Activated B cell treated with CpG ODN at 0.5 μM for 24 hours (primary cell): ENCODE measurements at regions of chr5 and their contacts with region 1.

Region 1: DNA sequence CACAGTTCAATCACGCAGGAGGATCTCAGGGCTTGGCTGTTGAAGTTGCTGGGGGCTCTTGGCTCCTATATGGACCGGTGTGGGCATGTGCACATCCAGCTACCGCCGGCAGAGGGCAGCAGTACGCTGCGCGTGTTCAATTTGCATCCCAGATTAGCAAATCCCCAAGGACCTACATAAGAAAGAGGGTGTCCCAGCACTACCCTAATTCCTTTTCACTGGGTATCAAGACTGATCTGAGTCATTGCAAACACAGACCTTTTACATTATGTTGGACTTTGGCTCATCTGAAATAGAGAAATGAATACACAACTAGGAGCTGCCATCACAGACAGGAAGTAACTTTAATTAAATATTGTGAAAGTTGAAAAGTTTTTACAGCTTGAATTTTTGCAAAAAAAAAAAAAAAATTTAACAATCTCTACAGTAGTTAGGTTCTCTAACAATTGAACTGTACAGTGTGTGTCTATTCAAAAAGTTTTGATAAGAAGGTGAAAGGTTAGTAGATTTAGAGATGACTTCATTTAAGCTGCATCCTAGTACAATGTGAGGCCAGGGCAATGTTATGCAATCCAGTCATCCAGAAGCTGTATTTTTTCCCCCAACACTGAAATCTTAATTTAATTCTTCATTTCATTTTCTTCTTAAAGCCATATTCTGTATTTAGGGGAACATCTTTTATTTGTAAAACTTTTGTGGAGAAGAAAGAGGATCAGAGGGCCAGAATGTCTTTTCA is 404.0 kb downstream of the EBF1 start:
- DNase-seq: peak; percentile 76
- ATAC-seq: peak; percentile 96
- H3K4me3 Mint-ChIP-seq: no peak overlapping the region
- H3K27ac Mint-ChIP-seq: peak overlapping the region; percentile 73
- H3K4me1 Mint-ChIP-seq: peaks cover 26% of the 10 kb centered on the region
- H3K27me3 Mint-ChIP-seq: no peaks in the 10 kb centered on the region
- CTCF ChIP-seq: peak; percentile 92

Region 2: DNA sequence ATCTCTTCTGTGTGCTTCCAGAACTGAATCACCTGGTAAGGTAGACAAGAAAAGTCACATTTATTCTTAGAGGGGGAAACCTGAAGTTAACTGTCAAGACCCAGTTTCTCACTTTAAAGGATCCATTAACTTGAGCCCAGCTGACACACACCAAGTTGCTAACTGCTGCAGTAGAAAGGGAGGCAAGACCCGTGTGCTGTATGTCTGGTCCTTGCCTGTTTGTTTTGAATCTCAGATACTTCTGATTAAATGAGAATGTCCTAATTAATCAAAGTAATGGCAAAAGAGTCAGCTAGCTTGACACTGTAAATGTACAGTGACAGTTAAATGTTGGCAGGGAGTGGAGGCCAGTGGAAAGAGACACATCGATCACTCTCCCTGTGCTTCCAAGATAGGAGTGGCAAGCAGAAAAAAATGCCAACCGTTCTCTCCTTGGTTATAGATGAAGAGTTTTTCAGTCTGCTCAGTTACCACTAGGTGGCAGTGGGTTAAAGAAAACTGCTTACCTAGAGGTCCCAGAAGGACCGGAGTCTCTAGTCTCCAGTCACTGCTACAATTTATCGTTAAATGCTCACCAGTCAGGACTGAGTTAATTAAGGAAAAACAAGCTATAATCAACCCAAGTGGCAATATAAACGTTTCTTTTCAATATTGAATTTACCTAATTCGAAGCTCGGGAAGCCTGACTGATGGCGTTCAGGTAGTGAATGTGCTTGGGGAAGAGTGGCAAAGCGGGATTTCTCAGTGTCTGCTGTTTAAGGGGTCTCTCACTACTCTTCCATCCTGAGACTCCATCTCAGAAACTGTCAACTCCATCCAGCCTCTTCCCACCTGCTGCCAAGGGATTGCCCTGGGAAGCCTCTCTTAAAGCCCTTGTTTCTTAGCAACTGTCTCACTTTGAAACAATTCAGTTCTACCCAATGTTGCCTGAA is 933.8 kb before region 1 on chr5:
- CTCF ChIA-PET with region 1: no interaction called
- POLR2A ChIA-PET with region 1: no interaction called
- intact Hi-C with region 1: loop called (anchors 1 kb)
- DNase-seq: no peak
- ATAC-seq: peak; percentile 87
- H3K4me3 Mint-ChIP-seq: no peak overlapping the region
- H3K27ac Mint-ChIP-seq: no peak overlapping the region
- H3K4me1 Mint-ChIP-seq: no peaks in the 10 kb centered on the region
- H3K27me3 Mint-ChIP-seq: no peaks in the 10 kb centered on the region
- CTCF ChIP-seq: peak; percentile 17

Region 3: DNA sequence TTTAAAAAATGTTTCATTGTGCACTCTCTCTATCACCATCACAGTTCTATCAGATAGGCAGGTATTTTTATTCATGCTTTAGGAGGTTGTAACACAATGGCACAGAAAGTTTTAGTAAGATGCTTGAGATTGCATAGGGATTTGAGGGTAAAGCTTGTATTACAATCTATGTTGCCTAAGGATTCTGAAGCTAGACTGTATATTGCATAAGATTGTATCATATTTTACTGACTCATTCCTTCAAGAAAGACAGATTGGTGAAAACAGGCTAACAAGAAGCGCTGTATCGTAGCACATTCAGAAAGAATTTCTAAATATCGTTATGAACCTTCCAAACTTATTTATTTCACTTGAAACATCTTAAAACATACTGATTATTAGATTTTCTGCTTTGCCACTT is 173.8 kb before region 1 on chr5:
- CTCF ChIA-PET with region 1: no interaction called
- POLR2A ChIA-PET with region 1: no interaction called
- intact Hi-C with region 1: no loop called
- DNase-seq: no peak
- ATAC-seq: no peak
- H3K4me3 Mint-ChIP-seq: no peak overlapping the region
- H3K27ac Mint-ChIP-seq: no peak overlapping the region
- H3K4me1 Mint-ChIP-seq: peaks cover 6% of the 10 kb centered on the region
- H3K27me3 Mint-ChIP-seq: no peaks in the 10 kb centered on the region
- CTCF ChIP-seq: no peak

Region 4: GRCh38 chr5:158739951-158740757 is 44.4 kb after region 1 on chr5:
- CTCF ChIA-PET with region 1: interaction called, 3 read pairs
- POLR2A ChIA-PET with region 1: interaction called, 11 read pairs
- intact Hi-C with region 1: no loop called
- DNase-seq: no peak
- ATAC-seq: no peak
- H3K4me3 Mint-ChIP-seq: no peak overlapping the region
- H3K27ac Mint-ChIP-seq: peak overlapping the region; percentile 27
- H3K4me1 Mint-ChIP-seq: peaks cover 62% of the 10 kb centered on the region
- H3K27me3 Mint-ChIP-seq: no peaks in the 10 kb centered on the region
- CTCF ChIP-seq: no peak

Region 5: DNA sequence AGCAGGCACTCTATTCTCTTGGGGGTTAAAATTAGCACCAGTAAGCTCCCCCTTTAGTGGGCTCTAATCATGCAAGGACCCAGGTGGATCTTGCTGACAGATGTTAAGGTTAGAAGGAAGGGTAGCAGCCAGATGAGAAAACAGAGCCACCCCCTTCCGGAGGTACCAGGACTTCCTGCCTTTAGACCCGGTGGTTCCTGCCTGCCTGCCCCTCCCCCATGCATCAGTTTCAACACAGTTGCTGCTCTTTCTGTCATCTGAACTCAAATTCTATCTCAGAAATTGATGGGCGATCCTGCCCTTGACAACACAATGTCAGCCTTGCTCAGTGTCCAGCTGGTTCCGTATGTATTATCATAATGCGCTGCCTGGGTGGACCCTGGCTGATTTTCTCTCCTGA is 116.6 kb after region 1 on chr5:
- CTCF ChIA-PET with region 1: interaction called, 5 read pairs
- POLR2A ChIA-PET with region 1: interaction called, 4 read pairs
- intact Hi-C with region 1: loop called (anchors 2 kb)
- DNase-seq: peak; percentile 42
- ATAC-seq: peak; percentile 79
- H3K4me3 Mint-ChIP-seq: peak overlapping the region; percentile 55
- H3K27ac Mint-ChIP-seq: peak overlapping the region; percentile 89
- H3K4me1 Mint-ChIP-seq: peaks cover 99% of the 10 kb centered on the region
- H3K27me3 Mint-ChIP-seq: no peaks in the 10 kb centered on the region
- CTCF ChIP-seq: no peak

Region 6: GRCh38 chr5:159049844-159050315 is 354.1 kb after region 1 on chr5:
- CTCF ChIA-PET with region 1: interaction called, 8 read pairs
- POLR2A ChIA-PET with region 1: interaction called, 6 read pairs
- intact Hi-C with region 1: loop called (anchors 1 kb)
- DNase-seq: no peak
- ATAC-seq: no peak
- H3K4me3 Mint-ChIP-seq: peak overlapping the region; percentile 76
- H3K27ac Mint-ChIP-seq: peak overlapping the region; percentile 93
- H3K4me1 Mint-ChIP-seq: peaks cover 97% of the 10 kb centered on the region
- H3K27me3 Mint-ChIP-seq: no peaks in the 10 kb centered on the region
- CTCF ChIP-seq: no peak

Region 7: DNA sequence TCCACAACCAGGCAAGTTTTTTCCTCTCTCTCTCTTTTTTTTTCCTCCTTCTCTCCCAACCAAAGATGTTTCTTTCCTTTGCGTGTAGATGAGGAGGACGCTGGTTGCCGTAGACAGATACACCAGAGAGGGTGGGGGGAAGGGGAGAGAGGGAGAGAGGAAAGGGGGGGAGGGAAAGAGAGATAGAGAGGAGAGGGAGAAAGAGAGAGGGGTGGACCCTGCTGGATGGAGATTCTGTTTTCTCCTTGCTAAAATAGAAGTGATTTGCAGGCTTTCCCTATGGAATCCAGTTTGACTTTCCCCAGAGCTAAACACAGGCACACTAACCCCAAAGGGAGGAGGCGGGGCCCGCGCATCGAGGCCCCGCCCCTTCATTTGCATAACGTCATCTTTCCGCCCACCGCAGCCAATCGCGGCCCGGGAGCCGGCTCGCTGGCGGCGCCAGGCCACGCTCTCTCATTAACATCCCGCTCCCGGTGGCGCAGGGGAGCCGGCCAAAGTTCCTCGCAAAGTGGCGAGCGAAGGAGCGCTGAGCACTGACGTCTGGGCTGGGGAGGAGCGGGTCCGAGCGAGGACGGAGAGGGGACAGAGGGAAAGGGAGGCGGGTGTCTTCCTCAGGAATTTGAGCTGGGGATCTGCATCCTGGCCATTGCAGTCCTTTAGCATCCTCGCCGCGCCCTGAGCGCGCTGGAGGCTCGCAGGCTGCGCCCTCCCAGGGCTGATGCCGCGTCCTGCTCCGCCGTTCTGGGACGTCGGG is 404.4 kb after region 1 on chr5:
- CTCF ChIA-PET with region 1: interaction called, 231 read pairs
- POLR2A ChIA-PET with region 1: interaction called, 97 read pairs
- intact Hi-C with region 1: loop called (anchors 1 kb)
- DNase-seq: peak; percentile 92
- ATAC-seq: peak; percentile 64
- H3K4me3 Mint-ChIP-seq: peak overlapping the region; percentile 99
- H3K27ac Mint-ChIP-seq: peak overlapping the region; percentile 95
- H3K4me1 Mint-ChIP-seq: peaks cover 69% of the 10 kb centered on the region
- H3K27me3 Mint-ChIP-seq: no peaks in the 10 kb centered on the region
- CTCF ChIP-seq: no peak